AG04450 (cell line): ENCODE measurements at regions of chr1 and their contacts with region 1.

Region 1: GRCh38 chr1:234065794-234066447 is 161.4 kb downstream of the SLC35F3 start:
- DNase-seq: peak; percentile 16
- H3K4me3 ChIP-seq: no peak overlapping the region
- H3K27ac ChIP-seq: no peak overlapping the region
- H3K27me3 ChIP-seq: no peaks in the 10 kb centered on the region
- CTCF ChIP-seq: peak; percentile 79

Region 2: DNA sequence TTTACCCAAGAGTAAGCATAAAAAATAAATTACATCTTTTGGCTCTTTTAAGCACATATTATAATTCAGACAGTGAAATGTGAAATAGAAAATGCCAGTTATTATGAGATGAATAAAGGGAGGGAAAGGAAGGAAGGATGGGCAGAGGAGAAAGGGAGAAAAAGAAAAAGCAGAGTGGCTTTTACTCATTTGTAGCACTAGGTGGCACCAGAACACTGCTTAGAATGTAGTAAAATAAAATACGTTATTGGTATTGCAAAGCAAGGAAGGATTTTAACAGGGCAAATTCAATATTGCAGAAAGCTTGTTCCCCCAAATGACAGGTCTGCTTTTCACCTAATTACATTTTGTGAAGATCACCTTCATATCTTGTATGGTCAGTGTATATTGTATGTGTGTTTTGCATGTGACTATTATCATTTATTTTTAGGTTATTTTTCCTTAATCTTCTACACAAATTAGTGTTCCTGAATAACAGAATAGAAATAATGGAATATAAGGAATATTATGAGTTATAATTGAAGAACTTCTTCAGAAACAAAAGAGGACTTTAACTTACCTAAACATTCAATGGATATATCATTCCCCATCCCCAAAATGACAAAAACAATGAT is 761.3 kb before region 1 on chr1:
- CTCF ChIA-PET with region 1: interaction called, 16 read pairs
- POLR2A ChIA-PET with region 1: no interaction called
- DNase-seq: no peak
- H3K4me3 ChIP-seq: no peak overlapping the region
- H3K27ac ChIP-seq: no peak overlapping the region
- H3K27me3 ChIP-seq: no peaks in the 10 kb centered on the region
- CTCF ChIP-seq: peak; percentile 83

Region 3: DNA sequence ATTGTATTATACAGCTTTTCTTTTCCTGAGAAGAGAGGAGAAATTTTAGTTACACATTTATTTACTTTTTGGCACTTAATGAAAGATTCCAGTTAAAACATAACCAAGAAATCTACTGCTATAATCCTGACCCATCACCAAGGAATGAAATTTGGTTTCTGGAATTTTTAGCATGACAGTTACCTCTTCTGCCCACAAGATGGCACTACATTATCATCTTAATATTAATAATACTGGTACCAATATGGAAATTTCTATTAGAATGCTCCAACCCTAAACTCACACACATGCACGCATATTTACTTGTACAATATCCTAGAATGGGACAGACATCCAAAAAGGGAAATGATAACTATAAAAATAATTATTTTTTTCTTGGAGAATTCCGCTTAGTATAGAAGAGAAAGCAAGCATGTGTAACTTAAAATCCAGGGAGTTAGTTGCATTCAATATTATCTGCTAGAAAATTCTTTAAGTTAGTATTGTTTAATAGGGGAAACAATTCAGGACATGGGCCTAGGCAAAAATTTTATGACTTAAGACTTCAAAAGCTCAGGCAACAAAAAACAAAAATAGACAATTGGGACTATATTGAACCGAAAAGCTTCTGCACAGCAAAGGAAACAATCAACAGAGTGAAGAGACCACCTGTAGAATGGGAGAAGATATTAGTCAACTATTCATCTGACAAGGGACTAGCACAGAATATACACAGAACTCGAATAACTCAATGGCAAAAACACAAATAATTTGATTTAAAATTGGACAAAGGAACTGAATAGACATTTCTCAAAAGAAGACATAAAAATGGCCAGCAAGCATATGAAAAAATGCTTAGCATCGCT is 701.0 kb before region 1 on chr1:
- CTCF ChIA-PET with region 1: interaction called, 24 read pairs
- POLR2A ChIA-PET with region 1: no interaction called
- DNase-seq: no peak
- H3K4me3 ChIP-seq: no peak overlapping the region
- H3K27ac ChIP-seq: no peak overlapping the region
- H3K27me3 ChIP-seq: no peaks in the 10 kb centered on the region
- CTCF ChIP-seq: peak; percentile 66

Region 4: GRCh38 chr1:233393084-233393840 is 672.7 kb before region 1 on chr1:
- CTCF ChIA-PET with region 1: interaction called, 10 read pairs
- POLR2A ChIA-PET with region 1: no interaction called
- DNase-seq: no peak
- H3K4me3 ChIP-seq: no peak overlapping the region
- H3K27ac ChIP-seq: no peak overlapping the region
- H3K27me3 ChIP-seq: no peaks in the 10 kb centered on the region
- CTCF ChIP-seq: no peak

Region 5: GRCh38 chr1:234040446-234041306 is 25.2 kb before region 1 on chr1:
- CTCF ChIA-PET with region 1: no interaction called
- POLR2A ChIA-PET with region 1: no interaction called
- DNase-seq: no peak
- H3K4me3 ChIP-seq: no peak overlapping the region
- H3K27ac ChIP-seq: no peak overlapping the region
- H3K27me3 ChIP-seq: no peaks in the 10 kb centered on the region
- CTCF ChIP-seq: no peak

Region 6: DNA sequence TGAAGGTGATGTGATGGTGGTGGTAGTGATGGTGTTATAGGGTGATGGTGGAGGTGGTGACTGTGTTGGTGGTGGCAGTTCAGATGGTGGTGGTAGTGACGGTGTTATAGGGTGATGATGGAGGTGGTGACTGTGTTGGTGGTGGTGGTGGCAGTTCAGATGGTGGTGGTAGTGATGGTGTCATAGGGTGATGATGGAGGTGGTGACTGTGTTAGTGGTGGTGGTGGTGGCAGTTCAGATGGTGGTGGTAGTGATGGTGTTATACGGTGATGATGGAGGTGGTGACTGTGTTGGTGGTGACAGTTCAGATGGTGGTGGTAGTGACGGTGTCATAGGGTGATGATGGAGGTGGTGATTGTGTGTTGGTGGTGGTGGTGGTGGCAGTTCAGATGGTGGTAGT is 32.0 kb after region 1 on chr1:
- CTCF ChIA-PET with region 1: no interaction called
- POLR2A ChIA-PET with region 1: no interaction called
- DNase-seq: no peak
- H3K4me3 ChIP-seq: no peak overlapping the region
- H3K27ac ChIP-seq: no peak overlapping the region
- H3K27me3 ChIP-seq: no peaks in the 10 kb centered on the region
- CTCF ChIP-seq: no peak